ENCODE measurements at regions of chr16 and their contacts with region 1.

Region 1: DNA sequence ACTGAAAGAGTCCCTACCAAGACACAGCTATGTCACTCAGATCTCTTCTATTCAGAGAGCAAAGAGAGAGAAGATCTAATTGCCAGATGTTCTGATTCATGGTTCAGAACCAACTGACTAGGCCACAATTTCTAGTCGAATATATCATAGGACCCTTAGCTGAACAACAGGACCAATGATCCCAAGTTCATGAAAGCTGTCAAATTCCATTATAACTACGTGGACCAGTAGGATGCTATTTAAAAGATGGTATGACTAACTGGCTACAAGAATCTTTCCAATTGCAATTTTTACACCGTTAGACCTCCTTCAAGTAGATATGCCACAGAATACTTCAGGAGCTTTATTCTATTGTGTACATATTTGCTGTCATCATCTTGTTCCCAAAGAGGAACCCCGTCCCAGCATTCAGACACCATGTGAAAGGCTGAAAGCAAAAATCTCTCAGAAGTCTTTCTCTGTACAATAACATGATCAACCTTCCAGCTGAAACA is 26.0 kb downstream of the DCUN1D3 start:
- DNase-seq: no peak
- ATAC-seq: no peak
- H3K4me3 Mint-ChIP-seq: peak overlapping the region; percentile 86
- H3K27ac Mint-ChIP-seq: peak overlapping the region; percentile 97
- H3K4me1 Mint-ChIP-seq: peaks cover 65% of the 10 kb centered on the region
- H3K27me3 Mint-ChIP-seq: no peaks in the 10 kb centered on the region

Region 2: DNA sequence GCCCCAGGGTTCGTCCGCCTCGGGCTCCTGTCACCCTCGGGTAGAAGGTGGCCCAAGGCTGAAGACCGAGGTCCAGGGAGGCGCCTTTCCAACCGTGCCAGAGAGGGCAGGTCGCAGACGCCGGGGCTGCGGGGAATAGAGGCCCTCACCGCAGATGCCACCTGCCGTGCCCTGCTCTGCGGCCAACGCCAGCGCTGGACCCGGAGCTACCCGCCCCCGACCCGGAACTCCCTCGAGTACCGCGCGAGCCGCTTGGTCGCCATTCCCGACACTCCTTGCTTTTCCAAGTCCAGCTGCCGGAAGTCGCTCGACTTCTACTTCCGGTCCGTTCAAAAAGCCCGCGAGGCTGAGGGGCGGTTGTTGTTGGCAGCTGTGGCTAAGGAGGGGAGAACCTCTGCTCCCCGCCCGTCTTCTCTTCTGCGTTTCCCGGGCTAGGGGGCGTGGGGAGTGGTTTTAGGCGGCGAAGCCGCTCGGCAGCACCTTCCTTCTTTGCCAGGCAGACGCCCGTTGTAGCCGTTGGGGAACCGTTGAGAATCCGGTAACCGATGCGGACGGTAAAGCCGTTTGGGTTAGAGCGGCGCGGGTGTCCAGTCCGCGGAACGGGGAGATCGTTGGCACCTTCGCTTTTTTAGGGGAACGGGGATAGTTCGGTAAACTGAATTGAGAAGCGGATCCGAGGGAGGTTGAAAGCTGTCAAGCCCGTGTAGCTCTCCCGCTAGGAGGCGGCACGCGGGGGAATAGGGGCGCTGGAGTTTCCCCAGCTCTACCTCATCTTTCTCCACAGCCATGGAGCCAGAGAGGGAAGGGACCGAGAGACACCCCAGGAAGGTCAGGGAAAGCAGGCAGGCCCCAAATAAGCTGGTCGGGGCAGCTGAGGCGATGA is 67.7 kb before region 1 on chr16 and contains the starts of genes ERI2 and REXO5:
- POLR2A ChIA-PET with region 1: interaction called, 12 read pairs
- DNase-seq: peak; percentile 79
- ATAC-seq: peak; percentile 82
- H3K4me3 Mint-ChIP-seq: peak within 1 kb of the TSS; percentile 95
- H3K27ac Mint-ChIP-seq: peak within 1 kb of the TSS; percentile 90
- H3K4me1 Mint-ChIP-seq: peaks cover 29% of the 10 kb centered on the region
- H3K27me3 Mint-ChIP-seq: no peaks in the 10 kb centered on the region
- total RNA-seq, gene ERI2: 14.1 to 16.6 TPM
- total RNA-seq, gene REXO5: 12.4 to 13.7 TPM

Measured in activated naive CD8-positive, alpha-beta T cell treated with anti-CD3 and anti-CD28 coated beads, Interleukin-2, amount 10 ng/mL, durations not matched to agents 7 days and 5 days (primary cell).